ENCODE measurements at regions of chr7 and their contacts with region 1.

Region 1: GRCh38 chr7:91264046-91264923 is at the start of gene FZD1:
- DNase-seq: peak; percentile 85
- H3K4me3 Mint-ChIP-seq: peak within 1 kb of the TSS; percentile 82
- H3K27ac Mint-ChIP-seq: no peak within 1 kb of the TSS
- H3K4me1 Mint-ChIP-seq: peaks cover 8% of the 10 kb centered on the region
- H3K27me3 Mint-ChIP-seq: peaks cover 53% of the 10 kb centered on the region
- total RNA-seq, gene FZD1: 0.29 to 0.30 TPM

Region 2: DNA sequence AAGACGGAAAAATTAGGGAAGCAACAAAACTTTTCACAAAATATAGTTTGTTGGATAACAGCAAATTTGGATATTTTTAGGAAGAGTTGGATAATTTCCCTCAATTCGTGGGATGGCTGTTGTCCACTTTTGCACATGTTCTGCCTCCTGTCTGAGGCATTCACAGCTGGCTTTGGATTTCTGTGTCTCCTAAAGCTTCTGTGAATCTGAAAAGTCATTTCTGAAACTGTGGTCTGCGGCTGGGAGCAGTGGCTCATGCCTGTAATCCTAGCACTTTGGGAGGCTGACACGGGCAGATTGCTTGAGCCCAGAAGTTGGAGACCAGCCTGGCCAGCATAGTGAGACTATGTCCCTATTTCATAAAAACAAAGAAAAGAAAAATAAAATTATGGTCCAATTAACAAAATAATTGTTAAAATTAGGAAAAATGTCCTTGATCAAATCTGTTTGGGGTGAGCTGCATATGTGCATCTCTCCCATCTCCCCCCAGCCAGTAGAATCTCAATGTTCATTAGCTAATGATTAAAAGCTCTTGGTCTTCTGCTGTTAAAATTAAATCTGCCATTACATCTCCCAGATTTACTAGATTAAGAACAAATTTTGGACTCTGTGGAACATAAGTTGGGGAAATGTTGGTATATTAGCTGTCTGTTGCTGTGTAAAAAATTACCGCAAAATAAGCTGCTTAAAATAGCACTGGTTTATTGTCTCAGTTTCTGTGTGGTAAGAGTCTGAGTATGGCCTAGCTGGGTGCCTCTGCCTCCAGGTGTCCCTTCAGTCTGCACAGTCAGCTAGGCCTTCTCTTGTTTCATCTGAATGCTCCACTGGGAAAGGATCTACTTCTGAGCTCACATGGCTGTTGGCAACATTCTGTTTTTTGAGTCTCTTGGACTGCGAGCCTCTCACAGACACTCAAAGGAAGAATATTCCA is 332.0 kb before region 1 on chr7:
- CTCF ChIA-PET with region 1: no interaction called
- intact Hi-C with region 1: no loop called
- DNase-seq: no peak
- H3K4me3 Mint-ChIP-seq: no peak overlapping the region
- H3K27ac Mint-ChIP-seq: no peak overlapping the region
- H3K4me1 Mint-ChIP-seq: no peaks in the 10 kb centered on the region
- H3K27me3 Mint-ChIP-seq: no peaks in the 10 kb centered on the region

Region 3: DNA sequence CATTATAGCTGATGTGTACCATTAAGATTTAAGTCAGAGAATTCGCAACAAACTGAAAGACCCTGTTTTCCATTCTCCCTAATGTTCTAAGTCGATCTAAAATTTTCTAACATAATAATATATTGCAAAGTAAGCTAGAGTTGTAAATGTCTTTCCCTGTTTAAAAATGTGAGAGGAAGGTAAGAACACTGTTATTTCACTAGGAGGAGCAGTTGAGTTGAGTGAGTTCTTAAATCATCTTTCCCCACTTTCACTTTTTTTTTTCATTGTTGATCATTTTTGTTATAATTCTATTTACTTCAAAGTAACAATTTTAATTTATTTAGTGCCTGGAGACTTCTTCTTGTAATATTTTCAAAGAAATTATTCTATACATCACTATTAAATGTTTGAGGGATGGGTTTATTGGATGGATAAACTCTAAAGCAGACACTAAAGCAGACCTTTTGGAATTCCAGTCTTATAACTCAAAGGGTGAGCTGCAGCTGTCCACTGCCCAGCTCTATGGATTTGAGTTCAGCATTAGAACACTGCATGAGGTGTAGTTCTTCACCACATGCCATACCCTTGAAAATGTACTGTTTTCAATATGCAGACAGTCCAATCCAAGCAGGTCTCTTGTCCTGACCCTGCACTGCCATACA is 181.3 kb before region 1 on chr7:
- CTCF ChIA-PET with region 1: no interaction called
- intact Hi-C with region 1: loop called (anchors 1 kb)
- DNase-seq: no peak
- H3K4me3 Mint-ChIP-seq: peak overlapping the region; percentile 13
- H3K27ac Mint-ChIP-seq: no peak overlapping the region
- H3K4me1 Mint-ChIP-seq: peaks cover 36% of the 10 kb centered on the region
- H3K27me3 Mint-ChIP-seq: no peaks in the 10 kb centered on the region

Region 4: GRCh38 chr7:91276909-91277308 is 12.6 kb after region 1 on chr7:
- CTCF ChIA-PET with region 1: no interaction called
- intact Hi-C with region 1: no loop called
- DNase-seq: no peak
- H3K4me3 Mint-ChIP-seq: no peak overlapping the region
- H3K27ac Mint-ChIP-seq: no peak overlapping the region
- H3K4me1 Mint-ChIP-seq: no peaks in the 10 kb centered on the region
- H3K27me3 Mint-ChIP-seq: peaks cover 5% of the 10 kb centered on the region

Region 5: GRCh38 chr7:91784463-91784862 is 520.2 kb after region 1 on chr7:
- CTCF ChIA-PET with region 1: no interaction called
- intact Hi-C with region 1: loop called (anchors 10 kb)
- DNase-seq: no peak
- H3K4me3 Mint-ChIP-seq: no peak overlapping the region
- H3K27ac Mint-ChIP-seq: no peak overlapping the region
- H3K4me1 Mint-ChIP-seq: no peaks in the 10 kb centered on the region
- H3K27me3 Mint-ChIP-seq: no peaks in the 10 kb centered on the region

Region 6: GRCh38 chr7:92075434-92076158 is 811.3 kb after region 1 on chr7:
- CTCF ChIA-PET with region 1: no interaction called
- intact Hi-C with region 1: loop called (anchors 10 kb)
- DNase-seq: no peak
- H3K4me3 Mint-ChIP-seq: no peak overlapping the region
- H3K27ac Mint-ChIP-seq: no peak overlapping the region
- H3K4me1 Mint-ChIP-seq: no peaks in the 10 kb centered on the region
- H3K27me3 Mint-ChIP-seq: no peaks in the 10 kb centered on the region

Measured in activated naive CD4-positive, alpha-beta T cell treated with anti-CD3 and anti-CD28 coated beads for 36 hours (primary cell).